Transverse colon (tissue), 4 donors: ENCODE measurements at regions of chr2 and their contacts with region 1.

Region 1: GRCh38 chr2:224284134-224284946 is 117.6 kb downstream of the FAM124B start:
- DNase-seq: peak; percentile 11
- H3K4me3 ChIP-seq: no peak overlapping the region
- H3K27ac ChIP-seq: no peak overlapping the region
- H3K4me1 ChIP-seq: no peaks in the 10 kb centered on the region
- H3K27me3 ChIP-seq: no peaks in the 10 kb centered on the region
- CTCF ChIP-seq: peak; percentile 60 to 98 (median 67)
- EP300 ChIP-seq: no peak
- POLR2A ChIP-seq: no peak

Region 2: GRCh38 chr2:223868005-223868404 is 416.3 kb before region 1 on chr2:
- in situ Hi-C with region 1: no loop called
- intact Hi-C with region 1: no loop called
- DNase-seq: peak; percentile 37
- H3K4me3 ChIP-seq: no peak overlapping the region
- H3K27ac ChIP-seq: no peak overlapping the region
- H3K4me1 ChIP-seq: no peaks in the 10 kb centered on the region
- H3K27me3 ChIP-seq: no peaks in the 10 kb centered on the region
- CTCF ChIP-seq: no peak
- EP300 ChIP-seq: no peak
- POLR2A ChIP-seq: no peak

Region 3: GRCh38 chr2:223993621-223994232 is 290.6 kb before region 1 on chr2:
- in situ Hi-C with region 1: loop called (anchors 5 to 10 kb)
- intact Hi-C with region 1: loop called (anchors 10 kb)
- DNase-seq: peak; percentile 66
- H3K4me3 ChIP-seq: no peak overlapping the region
- H3K27ac ChIP-seq: no peak overlapping the region
- H3K4me1 ChIP-seq: peaks cover 0 to 9% (median 6%) of the 10 kb centered on the region in 4 donors
- H3K27me3 ChIP-seq: no peaks in the 10 kb centered on the region
- CTCF ChIP-seq: peak; percentile 78 to 87 (median 85)
- EP300 ChIP-seq: no peak
- POLR2A ChIP-seq: no peak